Right lobe of liver (tissue), 6 donors: ENCODE measurements at regions of chr6 and their contacts with region 1.

Region 1: DNA sequence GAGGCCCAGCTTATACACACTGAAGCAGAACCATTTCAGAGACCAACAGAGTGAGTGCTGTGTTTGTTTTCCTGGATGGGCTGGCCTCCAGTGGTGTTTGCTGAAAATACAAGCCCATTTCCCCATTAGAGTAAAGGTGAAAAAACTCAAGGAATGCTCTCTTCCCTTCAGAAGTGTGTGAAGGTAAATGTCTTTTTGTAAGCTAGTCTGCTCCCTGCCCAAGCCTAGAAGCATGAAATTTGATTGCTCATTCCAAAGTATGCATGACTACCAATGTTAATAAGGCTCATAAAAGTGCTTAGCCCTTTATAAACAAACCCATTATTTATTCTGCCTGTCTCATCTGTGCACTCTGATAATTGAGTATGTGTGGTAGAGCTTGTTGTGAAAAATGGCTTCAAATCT is 59.1 kb downstream of the ADGRF1 start:
- DNase-seq: no peak
- ATAC-seq: peak in 1 of 4 donors; percentile 34
- H3K4me3 ChIP-seq: no peak overlapping the region
- H3K27ac ChIP-seq: no peak overlapping the region
- H3K4me1 ChIP-seq: no peaks in the 10 kb centered on the region
- H3K27me3 ChIP-seq: no peaks in the 10 kb centered on the region
- CTCF ChIP-seq: no peak
- POLR2A ChIP-seq: no peak

Region 2: DNA sequence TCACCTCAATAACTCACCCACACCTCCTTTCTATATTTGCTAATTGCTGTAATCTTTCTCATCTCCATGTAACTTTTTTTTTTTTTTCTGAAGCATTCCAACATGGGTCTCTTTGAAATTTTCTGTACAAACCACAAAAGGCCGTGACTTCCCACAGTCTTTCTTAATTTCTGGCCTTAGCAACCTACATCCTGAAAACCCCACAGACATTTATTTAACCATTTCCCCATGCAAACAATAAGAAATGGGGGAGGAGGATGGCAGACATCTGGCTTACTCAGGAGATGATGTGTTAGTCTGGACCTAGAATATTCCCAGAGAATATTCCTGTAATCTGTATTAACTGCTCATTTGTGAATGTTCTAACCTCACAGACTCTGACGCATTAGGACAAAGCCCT is 132.2 kb before region 1 on chr6:
- intact Hi-C with region 1: loop called in 1 of 2 experiments (anchors 10 kb)
- DNase-seq: no peak
- ATAC-seq: no peak
- H3K4me3 ChIP-seq: no peak overlapping the region
- H3K27ac ChIP-seq: no peak overlapping the region
- H3K4me1 ChIP-seq: no peaks in the 10 kb centered on the region
- H3K27me3 ChIP-seq: no peaks in the 10 kb centered on the region
- CTCF ChIP-seq: no peak
- POLR2A ChIP-seq: no peak

Region 3: DNA sequence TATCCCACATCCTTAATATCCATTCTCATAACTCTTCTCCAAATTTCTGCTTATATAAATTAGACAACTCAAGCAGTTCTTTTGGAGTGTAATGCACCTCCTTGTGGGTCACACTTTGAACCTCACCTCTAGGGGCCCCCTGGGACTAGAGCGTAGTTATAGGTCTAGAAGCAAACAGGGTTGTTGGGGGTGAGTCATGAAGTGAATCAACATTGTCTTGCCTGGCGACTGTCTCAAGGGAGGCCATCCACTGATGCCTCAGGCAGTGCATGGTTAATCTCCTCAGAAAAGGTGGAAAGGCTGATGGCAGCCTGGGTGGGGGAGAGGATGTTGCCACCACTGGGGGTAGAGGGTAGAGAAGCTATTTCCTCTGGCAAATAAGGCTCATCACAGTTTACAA is 197.6 kb after region 1 on chr6:
- intact Hi-C with region 1: no loop called
- DNase-seq: no peak
- ATAC-seq: no peak
- H3K4me3 ChIP-seq: no peak overlapping the region
- H3K27ac ChIP-seq: no peak overlapping the region
- H3K4me1 ChIP-seq: no peaks in the 10 kb centered on the region
- H3K27me3 ChIP-seq: no peaks in the 10 kb centered on the region
- CTCF ChIP-seq: no peak
- POLR2A ChIP-seq: no peak